Adrenal gland (tissue), 19 donors: ENCODE measurements at regions of chr3 and their contacts with region 1.

Region 1: DNA sequence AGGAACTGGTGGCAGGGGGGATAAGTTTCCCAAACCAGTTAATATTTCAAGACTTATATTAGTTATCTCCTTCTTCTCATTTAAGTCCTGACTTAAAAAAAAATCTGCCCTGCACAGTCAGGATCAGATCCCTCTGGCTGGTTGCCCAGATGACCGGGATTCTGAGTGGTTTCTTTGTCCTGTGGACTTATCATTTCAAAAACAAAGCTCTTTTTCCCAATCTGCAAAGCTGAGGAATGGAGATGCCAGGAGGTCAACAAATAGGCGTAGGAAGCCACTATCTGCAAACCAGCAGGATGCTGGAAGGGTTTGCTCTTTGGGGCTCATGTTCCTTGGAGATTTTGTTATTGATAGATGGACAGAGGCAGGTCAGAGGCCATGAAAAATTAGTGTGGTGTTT is 5.8 kb downstream of the C3orf20 start:
- DNase-seq: peak in 5 of 7 donors; percentile 40 to 65 (median 53)
- H3K4me3 ChIP-seq: no peak overlapping the region
- H3K27ac ChIP-seq: no peak overlapping the region
- H3K4me1 ChIP-seq: peaks cover 0 to 7% of the 10 kb centered on the region in 2 donors
- H3K27me3 ChIP-seq: no peaks in the 10 kb centered on the region
- CTCF ChIP-seq: no peak
- POLR2A ChIP-seq: no peak

Region 2: GRCh38 chr3:14780927-14781507 is 100.3 kb after region 1 on chr3:
- intact Hi-C with region 1: loop called in 1 of 2 experiments (anchors 10 kb)
- DNase-seq: peak in 5 of 7 donors; percentile 30 to 48 (median 43)
- H3K4me3 ChIP-seq: no peak overlapping the region
- H3K27ac ChIP-seq: no peak overlapping the region
- H3K4me1 ChIP-seq: no peaks in the 10 kb centered on the region
- H3K27me3 ChIP-seq: no peaks in the 10 kb centered on the region
- CTCF ChIP-seq: peak; percentile 12 to 55 (median 42)
- POLR2A ChIP-seq: no peak

Region 3: DNA sequence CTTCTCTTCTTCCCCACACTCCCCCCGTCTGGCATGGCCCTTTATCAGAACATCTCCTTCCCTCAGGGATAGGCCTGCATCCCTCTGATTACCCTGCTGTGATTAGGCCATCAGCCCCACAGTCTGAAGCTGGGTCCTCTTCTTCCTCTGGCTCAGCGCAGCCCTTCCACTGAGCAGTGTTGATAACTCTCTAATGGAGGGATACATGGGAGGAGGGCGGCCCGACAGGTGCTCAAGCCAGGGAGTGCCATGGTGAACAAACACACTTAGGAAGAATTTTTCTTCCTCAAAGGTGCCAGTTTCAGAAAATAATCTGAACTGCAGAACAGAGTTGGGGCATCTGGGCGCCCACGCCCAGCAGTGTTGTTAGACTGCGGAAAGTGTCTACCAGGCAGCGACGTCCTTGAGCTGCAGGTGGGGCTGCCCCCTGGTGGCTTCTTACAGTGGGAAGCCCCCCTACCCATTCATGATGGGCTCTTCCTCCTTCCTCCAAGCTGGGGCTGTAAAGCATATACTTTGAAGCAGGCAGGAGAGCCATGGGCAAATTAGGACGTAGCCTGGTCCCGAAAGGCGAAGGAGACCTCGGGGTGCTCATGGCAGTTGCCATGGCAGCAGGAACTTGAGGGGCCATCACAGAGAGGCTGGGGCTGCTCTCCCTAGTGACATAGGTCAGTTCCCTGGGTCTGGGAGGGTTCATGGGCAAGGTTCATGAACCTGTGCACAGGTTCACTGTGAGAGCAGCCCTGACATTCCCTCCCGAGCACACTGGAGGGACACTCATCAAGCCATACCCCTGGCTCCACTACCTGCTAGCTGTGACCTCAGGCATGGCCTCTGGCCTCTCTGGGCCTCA is 233.4 kb after region 1 on chr3:
- intact Hi-C with region 1: loop called in 1 of 2 experiments (anchors 5 kb)
- DNase-seq: peak in 1 of 7 donors; percentile 50
- H3K4me3 ChIP-seq: no peak overlapping the region
- H3K27ac ChIP-seq: no peak overlapping the region
- H3K4me1 ChIP-seq: no peaks in the 10 kb centered on the region
- H3K27me3 ChIP-seq: no peaks in the 10 kb centered on the region
- CTCF ChIP-seq: no peak
- POLR2A ChIP-seq: no peak